ENCODE measurements at regions of chr12 and their contacts with region 1.

Region 1: DNA sequence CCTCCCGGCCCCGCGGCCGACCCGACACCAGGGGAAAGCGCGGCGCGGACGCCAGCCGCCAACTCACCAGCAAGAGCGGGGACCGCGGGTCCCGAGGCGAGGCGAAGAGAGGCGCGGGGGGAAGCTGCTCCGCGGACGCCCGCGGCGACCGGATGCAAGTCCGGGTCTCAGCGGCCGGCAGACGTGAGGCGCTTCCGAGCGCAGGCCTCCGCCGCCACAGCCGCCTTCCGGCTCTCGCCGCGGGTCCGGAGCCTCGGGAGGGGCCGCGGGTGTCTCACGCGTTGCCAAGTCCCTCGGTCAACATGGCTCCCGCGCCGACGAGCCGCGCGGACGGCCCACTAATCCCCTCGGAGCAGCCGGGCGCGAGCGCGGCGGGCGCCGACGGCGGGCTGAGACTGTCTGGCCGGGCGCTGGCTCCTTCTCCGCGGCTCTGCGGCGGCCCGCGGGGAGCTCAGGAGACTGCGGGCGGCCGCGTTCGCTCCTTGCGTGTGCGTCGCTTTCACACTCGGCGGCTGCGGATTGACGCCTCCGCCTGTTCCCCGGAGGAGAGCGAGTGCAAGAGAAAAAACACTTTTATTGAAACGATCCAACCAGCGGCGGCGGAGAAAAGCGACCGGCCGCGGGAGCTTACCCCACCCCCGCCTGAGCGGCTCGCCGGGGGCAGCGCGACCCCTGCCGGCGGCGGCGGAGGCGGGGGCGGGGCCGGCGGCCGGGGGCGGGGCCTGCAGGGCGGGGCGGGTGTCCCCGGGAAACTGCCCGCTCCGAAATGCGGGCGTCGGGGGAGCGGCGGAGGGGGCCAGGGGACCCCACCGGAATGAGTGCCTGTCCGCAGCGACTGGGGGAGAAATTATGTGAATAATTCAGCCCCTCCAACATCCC is at the start of gene CDK17:
- DNase-seq: peak; percentile 70 to 81
- H3K4me3 ChIP-seq: peak within 1 kb of the TSS; percentile 67
- H3K27ac ChIP-seq: peak within 1 kb of the TSS; percentile 93
- H3K4me1 ChIP-seq: peaks cover 51% of the 10 kb centered on the region
- H3K27me3 ChIP-seq: no peaks in the 10 kb centered on the region
- CTCF ChIP-seq: no peak
- total RNA-seq, gene CDK17: 22.5 and 29.0 TPM in 2 replicates

Region 2: GRCh38 chr12:96237465-96238077 is 162.6 kb before region 1 on chr12:
- CTCF ChIA-PET with region 1: no interaction called
- POLR2A ChIA-PET with region 1: no interaction called
- intact Hi-C with region 1: no loop called
- DNase-seq: peak in 1 of 2 experiments; percentile 33
- H3K4me3 ChIP-seq: no peak overlapping the region
- H3K27ac ChIP-seq: no peak overlapping the region
- H3K4me1 ChIP-seq: no peaks in the 10 kb centered on the region
- H3K27me3 ChIP-seq: no peaks in the 10 kb centered on the region
- CTCF ChIP-seq: no peak

Region 3: GRCh38 chr12:96294831-96295230 is 105.3 kb before region 1 on chr12:
- CTCF ChIA-PET with region 1: no interaction called
- POLR2A ChIA-PET with region 1: no interaction called
- intact Hi-C with region 1: loop called (anchors 10 kb)
- DNase-seq: no peak
- H3K4me3 ChIP-seq: no peak overlapping the region
- H3K27ac ChIP-seq: no peak overlapping the region
- H3K4me1 ChIP-seq: no peaks in the 10 kb centered on the region
- H3K27me3 ChIP-seq: no peaks in the 10 kb centered on the region
- CTCF ChIP-seq: no peak

Region 4: DNA sequence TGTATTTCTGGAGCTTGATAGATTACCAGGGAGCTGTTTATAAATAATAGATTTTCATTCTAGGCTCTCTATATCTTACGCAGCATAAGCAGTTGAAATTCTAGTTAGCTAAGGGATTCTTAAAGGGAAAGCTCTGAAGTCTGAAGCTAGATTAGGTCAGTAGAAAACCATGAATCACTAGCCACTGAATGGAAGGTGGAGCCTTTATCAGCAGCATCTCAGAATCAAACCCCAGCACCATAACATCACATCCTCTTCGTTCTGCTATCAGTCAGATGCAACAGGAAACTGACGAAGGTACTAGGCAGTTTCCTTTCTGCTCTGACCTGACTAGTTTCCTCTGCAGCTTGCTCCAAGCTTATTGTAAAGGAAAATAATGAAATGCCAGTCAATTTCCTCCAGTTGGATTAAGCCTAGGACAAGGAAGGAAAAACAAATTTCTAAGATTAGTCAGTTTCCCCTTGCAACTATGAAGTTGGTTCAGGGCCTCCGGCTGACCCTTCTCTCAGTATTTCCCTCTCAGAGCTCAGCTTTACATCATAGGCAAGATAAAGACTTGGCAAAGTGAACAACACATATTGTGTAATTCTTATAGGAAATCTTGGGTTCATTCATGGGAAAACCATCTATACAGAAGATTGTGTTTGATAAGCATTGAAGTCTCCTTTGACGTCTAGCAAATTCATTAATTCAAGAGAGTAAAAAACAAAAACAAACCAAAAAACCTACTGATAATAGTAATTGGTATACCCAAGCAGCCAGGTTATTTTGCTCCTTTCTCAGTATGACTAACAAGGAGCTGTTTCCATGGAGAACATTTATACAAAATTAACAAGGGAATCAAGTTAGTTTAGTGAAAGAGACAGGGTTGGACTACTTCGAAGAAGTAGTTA is 45.8 kb after region 1 on chr12:
- CTCF ChIA-PET with region 1: no interaction called
- POLR2A ChIA-PET with region 1: no interaction called
- intact Hi-C with region 1: loop called (anchors 5 kb)
- DNase-seq: peak; percentile 40 to 90
- H3K4me3 ChIP-seq: peak overlapping the region; percentile 26; the same call in 1 of the 2 replicates
- H3K27ac ChIP-seq: peak overlapping the region; percentile 90
- H3K4me1 ChIP-seq: peaks cover 40% of the 10 kb centered on the region
- H3K27me3 ChIP-seq: no peaks in the 10 kb centered on the region
- CTCF ChIP-seq: no peak

Region 5: GRCh38 chr12:96489103-96490056 is 89.2 kb after region 1 on chr12 and contains the start of gene CFAP54:
- CTCF ChIA-PET with region 1: interaction called, 3 read pairs
- POLR2A ChIA-PET with region 1: interaction called, 8 read pairs
- intact Hi-C with region 1: loop called (anchors 1 kb)
- DNase-seq: peak; percentile 85 to 95
- H3K4me3 ChIP-seq: peak within 1 kb of the TSS; percentile 91
- H3K27ac ChIP-seq: peak within 1 kb of the TSS; percentile 87
- H3K4me1 ChIP-seq: peaks cover 48% of the 10 kb centered on the region
- H3K27me3 ChIP-seq: no peaks in the 10 kb centered on the region
- CTCF ChIP-seq: peak; percentile 87
- total RNA-seq, gene CFAP54: 7.1 and 16.4 TPM in 2 replicates

Region 6: GRCh38 chr12:96516472-96517430 is 116.6 kb after region 1 on chr12:
- CTCF ChIA-PET with region 1: interaction called, 4 read pairs
- POLR2A ChIA-PET with region 1: interaction called, 7 read pairs
- intact Hi-C with region 1: loop called (anchors 1 kb)
- DNase-seq: peak; percentile 71 to 73
- H3K4me3 ChIP-seq: no peak overlapping the region
- H3K27ac ChIP-seq: 0 out of 2 replicates have a peak overlapping the region, but pooled peaks have one; percentile 13
- H3K4me1 ChIP-seq: peaks cover 5% of the 10 kb centered on the region; the same call in 1 of the 2 replicates
- H3K27me3 ChIP-seq: no peaks in the 10 kb centered on the region
- CTCF ChIP-seq: peak; percentile 89

Region 7: DNA sequence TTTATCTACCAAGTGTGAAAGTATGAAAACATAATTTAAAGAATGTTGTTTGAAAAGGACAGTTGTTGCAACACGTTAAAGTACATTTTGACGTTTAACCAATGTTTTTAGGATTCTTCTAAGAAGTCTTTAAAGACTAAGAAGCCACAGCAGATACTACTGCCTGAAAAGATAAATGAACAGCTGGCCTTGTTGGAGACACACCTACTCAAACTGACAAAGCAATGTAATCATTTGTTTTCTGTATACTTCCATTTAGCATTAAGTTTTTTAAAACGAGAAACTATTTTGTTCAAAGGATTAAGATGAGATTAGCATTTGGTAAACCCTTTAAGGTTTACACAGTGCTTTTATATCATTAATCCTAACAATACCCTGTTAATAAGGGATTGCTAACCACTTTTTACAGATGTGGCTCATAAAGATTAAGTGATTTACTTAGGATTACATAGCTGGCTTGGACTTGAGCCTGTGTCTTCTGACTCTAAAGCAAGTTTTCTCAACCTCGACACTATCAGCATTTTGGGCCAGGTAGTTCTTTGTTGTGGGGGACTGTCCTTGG is 223.6 kb after region 1 on chr12:
- CTCF ChIA-PET with region 1: no interaction called
- POLR2A ChIA-PET with region 1: no interaction called
- intact Hi-C with region 1: no loop called
- DNase-seq: no peak
- H3K4me3 ChIP-seq: no peak overlapping the region
- H3K27ac ChIP-seq: no peak overlapping the region
- H3K4me1 ChIP-seq: no peaks in the 10 kb centered on the region
- H3K27me3 ChIP-seq: no peaks in the 10 kb centered on the region
- CTCF ChIP-seq: no peak

Region 8: DNA sequence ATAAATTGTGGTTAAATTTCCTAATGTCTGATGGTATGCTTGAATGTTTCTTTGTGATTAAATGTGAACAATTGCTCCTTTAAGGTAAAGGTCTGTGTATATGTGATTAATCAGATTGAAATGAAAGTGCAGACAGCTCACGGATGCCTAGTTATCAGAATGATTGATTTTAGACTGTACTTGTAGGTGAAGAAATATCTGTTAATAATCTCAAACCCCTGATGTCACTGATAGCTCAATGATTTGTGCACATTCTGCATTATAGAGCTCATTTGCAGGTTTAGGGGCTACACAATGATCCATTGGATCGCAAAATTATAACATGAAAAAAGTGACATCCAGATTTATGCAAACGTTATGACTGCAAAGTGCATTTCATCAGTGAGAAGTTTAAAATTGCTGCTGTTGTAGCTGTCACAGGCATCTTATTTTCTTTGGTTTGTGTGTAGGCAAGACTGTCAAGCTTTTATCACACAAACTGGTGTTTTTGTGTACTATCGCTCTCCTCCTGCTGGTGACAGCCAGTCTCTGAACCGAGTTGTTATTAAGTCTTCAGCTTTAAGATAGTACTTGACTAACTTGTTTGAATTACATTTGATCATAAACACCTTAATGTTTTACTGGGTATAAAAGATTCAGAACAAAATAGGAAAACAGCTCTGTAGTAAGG is 959.0 kb after region 1 on chr12:
- CTCF ChIA-PET with region 1: no interaction called
- POLR2A ChIA-PET with region 1: no interaction called
- intact Hi-C with region 1: no loop called
- DNase-seq: no peak
- H3K4me3 ChIP-seq: no peak overlapping the region
- H3K27ac ChIP-seq: no peak overlapping the region
- H3K4me1 ChIP-seq: no peaks in the 10 kb centered on the region
- H3K27me3 ChIP-seq: peaks cover 15% of the 10 kb centered on the region; the same call in 1 of the 2 replicates
- CTCF ChIP-seq: no peak